ENCODE measurements at regions of chr14 and their contacts with region 1.

Region 1: DNA sequence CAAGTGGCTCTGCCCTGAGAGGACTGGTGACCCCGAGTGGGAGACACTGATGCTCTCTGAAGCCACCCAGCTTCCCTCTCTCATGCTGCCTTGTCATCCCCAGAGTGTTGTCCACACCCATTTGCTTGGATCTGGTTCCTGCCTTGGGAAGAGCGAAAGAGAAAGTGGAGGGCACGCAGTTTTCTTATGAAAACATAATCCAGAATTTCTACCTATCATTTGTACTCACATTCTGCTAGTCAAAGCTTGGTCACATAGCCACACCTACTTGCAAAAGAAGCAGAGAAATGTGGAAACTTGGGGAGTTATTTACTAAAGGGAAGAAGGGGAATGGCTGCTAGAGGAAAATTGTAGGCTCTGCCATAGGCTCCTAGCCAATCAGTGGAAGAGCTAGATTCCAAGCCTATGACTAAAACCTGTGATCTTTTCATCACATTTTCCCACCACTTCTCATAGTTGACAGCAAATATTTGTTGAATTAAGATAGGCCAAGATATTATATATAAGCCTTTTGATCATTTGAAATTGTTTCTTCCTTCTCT is 326.3 kb downstream of the ZFP36L1 start:
- DNase-seq: peak; percentile 93
- H3K4me3 Mint-ChIP-seq: peak overlapping the region; percentile 60
- H3K27ac Mint-ChIP-seq: peak overlapping the region; percentile 75
- H3K4me1 Mint-ChIP-seq: peaks cover 65% of the 10 kb centered on the region
- H3K27me3 Mint-ChIP-seq: no peaks in the 10 kb centered on the region
- CTCF ChIP-seq: no peak

Region 2: GRCh38 chr14:68401855-68402254 is 64.7 kb before region 1 on chr14:
- CTCF ChIA-PET with region 1: interaction called, 3 read pairs
- POLR2A ChIA-PET with region 1: interaction called, 3 read pairs
- intact Hi-C with region 1: loop called (anchors 5 kb)
- DNase-seq: no peak
- H3K4me3 Mint-ChIP-seq: no peak overlapping the region
- H3K27ac Mint-ChIP-seq: peak overlapping the region; percentile 59
- H3K4me1 Mint-ChIP-seq: peaks cover 47% of the 10 kb centered on the region
- H3K27me3 Mint-ChIP-seq: no peaks in the 10 kb centered on the region
- CTCF ChIP-seq: no peak

Region 3: GRCh38 chr14:68520637-68521556 is 54.3 kb after region 1 on chr14:
- CTCF ChIA-PET with region 1: interaction called, 3 read pairs
- POLR2A ChIA-PET with region 1: interaction called, 20 read pairs
- intact Hi-C with region 1: no loop called
- DNase-seq: peak; percentile 83
- H3K4me3 Mint-ChIP-seq: peak overlapping the region; percentile 28
- H3K27ac Mint-ChIP-seq: peak overlapping the region; percentile 98
- H3K4me1 Mint-ChIP-seq: peaks cover 34% of the 10 kb centered on the region
- H3K27me3 Mint-ChIP-seq: no peaks in the 10 kb centered on the region
- CTCF ChIP-seq: no peak

Region 4: DNA sequence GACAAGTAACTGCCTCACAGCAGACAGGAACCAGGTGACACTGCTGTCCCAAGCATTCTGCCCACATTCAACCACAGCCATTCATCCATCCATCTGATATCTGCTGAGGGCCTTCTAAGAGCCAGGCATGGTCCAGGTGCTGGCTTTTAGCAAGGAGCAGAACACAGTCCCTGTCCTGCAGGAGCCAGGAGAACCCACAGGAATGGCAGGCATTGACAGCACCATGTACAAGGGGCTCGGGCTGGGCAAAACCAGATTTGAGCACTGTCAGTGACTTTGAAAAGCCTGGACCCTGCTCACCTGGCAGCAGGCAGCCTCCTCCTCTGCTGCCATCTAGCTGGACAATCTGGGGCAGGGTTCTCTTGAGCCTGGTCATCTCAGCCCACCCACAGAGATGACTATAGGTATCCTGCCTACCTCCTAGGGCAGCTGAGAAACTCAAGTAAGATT is 189.4 kb after region 1 on chr14:
- CTCF ChIA-PET with region 1: no interaction called
- POLR2A ChIA-PET with region 1: no interaction called
- intact Hi-C with region 1: no loop called
- DNase-seq: peak; percentile 35
- H3K4me3 Mint-ChIP-seq: no peak overlapping the region
- H3K27ac Mint-ChIP-seq: no peak overlapping the region
- H3K4me1 Mint-ChIP-seq: peaks cover 5% of the 10 kb centered on the region
- H3K27me3 Mint-ChIP-seq: no peaks in the 10 kb centered on the region
- CTCF ChIP-seq: no peak

Region 5: DNA sequence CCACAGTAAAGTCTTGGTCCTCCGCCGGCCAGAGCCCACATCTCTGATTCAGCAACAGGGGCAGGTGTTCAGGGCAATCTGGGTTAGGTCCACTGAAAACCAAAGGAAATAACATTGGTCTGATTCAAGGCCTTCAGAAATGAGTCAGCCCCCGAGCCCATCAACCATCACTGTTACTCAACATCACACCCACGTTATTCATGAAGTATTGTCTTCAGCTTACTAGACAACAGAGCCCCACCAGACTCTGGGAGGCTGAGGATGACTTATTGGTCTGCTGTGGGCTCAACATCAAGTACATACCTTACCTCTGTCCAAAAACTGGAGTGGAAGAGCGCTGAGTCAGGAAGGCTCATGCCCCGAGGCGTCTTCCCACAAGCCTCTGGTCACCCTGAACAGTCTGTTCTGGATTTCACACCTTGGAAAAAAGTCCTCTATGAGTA is 228.8 kb after region 1 on chr14:
- CTCF ChIA-PET with region 1: no interaction called
- POLR2A ChIA-PET with region 1: no interaction called
- intact Hi-C with region 1: loop called (anchors 5 kb)
- DNase-seq: peak; percentile 99
- H3K4me3 Mint-ChIP-seq: peak overlapping the region; percentile 40
- H3K27ac Mint-ChIP-seq: peak overlapping the region; percentile 96
- H3K4me1 Mint-ChIP-seq: peaks cover 44% of the 10 kb centered on the region
- H3K27me3 Mint-ChIP-seq: no peaks in the 10 kb centered on the region
- CTCF ChIP-seq: no peak